T-cell (primary cell): ENCODE measurements at regions of chr16 and their contacts with region 1.

Region 1: GRCh38 chr16:74169066-74169465 is 127.5 kb upstream of the PSMD7 start:
- DNase-seq: no peak
- ATAC-seq: no peak
- H3K4me3 ChIP-seq: no peak overlapping the region
- H3K4me3 Mint-ChIP-seq: no peak overlapping the region
- H3K27ac ChIP-seq: no peak overlapping the region
- H3K27ac Mint-ChIP-seq: no peak overlapping the region
- H3K4me1 ChIP-seq: no peaks in the 10 kb centered on the region
- H3K4me1 Mint-ChIP-seq: no peaks in the 10 kb centered on the region
- H3K27me3 ChIP-seq: no peaks in the 10 kb centered on the region
- H3K27me3 Mint-ChIP-seq: peaks cover 2 to 4% of the 10 kb centered on the region in 2 donors

Region 2: GRCh38 chr16:73584157-73584556 is 584.9 kb before region 1 on chr16:
- CTCF ChIA-PET with region 1: no interaction called
- POLR2A ChIA-PET with region 1: no interaction called
- DNase-seq: no peak
- ATAC-seq: no peak
- H3K4me3 ChIP-seq: no peak overlapping the region
- H3K4me3 Mint-ChIP-seq: no peak overlapping the region
- H3K27ac ChIP-seq: no peak overlapping the region
- H3K27ac Mint-ChIP-seq: no peak overlapping the region
- H3K4me1 ChIP-seq: no peaks in the 10 kb centered on the region
- H3K4me1 Mint-ChIP-seq: no peaks in the 10 kb centered on the region
- H3K27me3 ChIP-seq: no peaks in the 10 kb centered on the region
- H3K27me3 Mint-ChIP-seq: no peaks in the 10 kb centered on the region

Region 3: GRCh38 chr16:74094514-74094913 is 74.6 kb before region 1 on chr16:
- CTCF ChIA-PET with region 1: no interaction called
- POLR2A ChIA-PET with region 1: no interaction called
- DNase-seq: no peak
- ATAC-seq: no peak
- H3K4me3 ChIP-seq: no peak overlapping the region
- H3K4me3 Mint-ChIP-seq: no peak overlapping the region
- H3K27ac ChIP-seq: no peak overlapping the region
- H3K27ac Mint-ChIP-seq: no peak overlapping the region
- H3K4me1 ChIP-seq: no peaks in the 10 kb centered on the region
- H3K4me1 Mint-ChIP-seq: no peaks in the 10 kb centered on the region
- H3K27me3 ChIP-seq: no peaks in the 10 kb centered on the region
- H3K27me3 Mint-ChIP-seq: peaks cover 0 to 1% of the 10 kb centered on the region in 2 donors

Region 4: DNA sequence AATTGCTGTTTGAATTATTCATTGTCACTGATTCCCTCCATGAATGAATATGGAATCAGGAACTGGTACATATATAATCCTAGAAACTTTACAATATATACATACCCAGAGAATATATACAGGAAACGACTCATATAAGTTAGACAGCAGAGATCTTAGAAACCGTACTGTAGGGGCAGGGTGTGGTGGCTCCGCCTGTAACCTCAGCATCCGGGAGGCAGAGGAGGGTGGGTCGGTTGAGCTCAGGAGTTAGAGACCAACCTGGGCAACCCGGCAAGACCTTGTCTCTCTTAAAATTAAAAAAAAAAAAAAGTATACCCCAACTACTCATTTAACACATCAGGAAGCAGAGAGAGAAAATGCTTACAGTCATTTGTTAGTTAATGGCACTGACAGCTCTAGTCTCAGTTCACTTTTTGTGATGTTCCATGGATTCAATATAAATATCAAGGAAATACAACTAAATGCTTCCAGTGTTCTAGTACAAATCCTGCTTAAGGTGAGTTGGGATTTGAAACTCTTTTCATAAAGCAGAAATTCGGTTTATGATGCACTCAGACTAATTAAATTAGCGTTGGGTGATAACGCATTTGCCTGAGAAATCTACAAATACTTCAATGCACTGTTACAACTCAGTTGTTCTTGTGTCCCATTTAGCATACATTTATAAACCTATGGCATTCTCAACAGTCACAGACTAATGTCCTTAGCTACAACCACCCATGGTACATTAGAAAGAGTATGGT is 432.2 kb after region 1 on chr16:
- CTCF ChIA-PET with region 1: no interaction called
- POLR2A ChIA-PET with region 1: interaction called in 1 of 2 experiments, 10 read pairs
- DNase-seq: peak; percentile 41 to 80 (median 68)
- ATAC-seq: peak; percentile 96 to 100 (median 98)
- H3K4me3 ChIP-seq: peak overlapping the region in 1 of 2 donors; percentile 8
- H3K4me3 Mint-ChIP-seq: peak overlapping the region; percentile 64 to 98 (median 73)
- H3K27ac ChIP-seq: peak overlapping the region; percentile 76
- H3K27ac Mint-ChIP-seq: peak overlapping the region; percentile 96 to 98
- H3K4me1 ChIP-seq: peaks cover 46 to 58% of the 10 kb centered on the region in 2 experiments
- H3K4me1 Mint-ChIP-seq: peaks cover 76 to 87% (median 80%) of the 10 kb centered on the region in 3 donors
- H3K27me3 ChIP-seq: no peaks in the 10 kb centered on the region
- H3K27me3 Mint-ChIP-seq: no peaks in the 10 kb centered on the region